Mucosa of descending colon (tissue), 3 donors: ENCODE measurements at regions of chr14 and their contacts with region 1.

Region 1: DNA sequence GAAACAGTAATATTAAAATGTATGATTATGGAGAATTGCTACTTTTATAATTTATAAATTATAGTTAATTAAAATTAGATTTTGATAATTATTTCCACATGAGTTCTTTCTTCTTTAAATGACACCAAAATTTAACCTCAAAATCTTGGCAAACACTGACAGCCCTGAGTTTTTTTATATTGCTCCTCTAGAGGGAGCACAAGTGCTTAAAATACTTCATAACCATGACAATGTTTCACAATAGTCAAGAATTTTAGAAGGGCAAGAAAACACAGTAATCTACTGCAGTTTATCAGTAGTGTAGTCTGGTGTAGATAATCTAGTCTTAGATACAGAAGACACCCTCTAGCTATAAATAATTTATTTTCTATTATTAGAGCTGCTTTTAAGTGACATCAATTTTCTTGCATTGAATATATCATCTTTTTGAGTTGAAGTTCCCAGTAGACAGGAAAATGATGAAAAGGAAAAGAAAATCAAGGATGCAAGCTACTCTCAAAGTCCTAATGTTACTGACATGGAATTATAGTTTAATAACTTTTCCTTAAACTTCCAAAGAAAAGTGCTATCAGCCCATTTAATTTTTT is 14.3 kb upstream of the PTGER2 start:
- DNase-seq: peak in 1 of 3 donors; percentile 41
- ATAC-seq: peak; percentile 70
- H3K4me3 ChIP-seq: no peak overlapping the region
- H3K4me1 ChIP-seq: peaks cover 8% of the 10 kb centered on the region
- CTCF ChIP-seq: peak; percentile 46

Region 2: GRCh38 chr14:52473557-52473956 is 173.8 kb after region 1 on chr14:
- intact Hi-C with region 1: loop called (anchors 5 kb)
- DNase-seq: peak in 1 of 3 donors; percentile 14
- ATAC-seq: peak; percentile 44
- H3K4me3 ChIP-seq: no peak overlapping the region
- H3K4me1 ChIP-seq: peaks cover 6% of the 10 kb centered on the region
- CTCF ChIP-seq: no peak